ENCODE measurements at regions of chrX and their contacts with region 1.

Region 1: DNA sequence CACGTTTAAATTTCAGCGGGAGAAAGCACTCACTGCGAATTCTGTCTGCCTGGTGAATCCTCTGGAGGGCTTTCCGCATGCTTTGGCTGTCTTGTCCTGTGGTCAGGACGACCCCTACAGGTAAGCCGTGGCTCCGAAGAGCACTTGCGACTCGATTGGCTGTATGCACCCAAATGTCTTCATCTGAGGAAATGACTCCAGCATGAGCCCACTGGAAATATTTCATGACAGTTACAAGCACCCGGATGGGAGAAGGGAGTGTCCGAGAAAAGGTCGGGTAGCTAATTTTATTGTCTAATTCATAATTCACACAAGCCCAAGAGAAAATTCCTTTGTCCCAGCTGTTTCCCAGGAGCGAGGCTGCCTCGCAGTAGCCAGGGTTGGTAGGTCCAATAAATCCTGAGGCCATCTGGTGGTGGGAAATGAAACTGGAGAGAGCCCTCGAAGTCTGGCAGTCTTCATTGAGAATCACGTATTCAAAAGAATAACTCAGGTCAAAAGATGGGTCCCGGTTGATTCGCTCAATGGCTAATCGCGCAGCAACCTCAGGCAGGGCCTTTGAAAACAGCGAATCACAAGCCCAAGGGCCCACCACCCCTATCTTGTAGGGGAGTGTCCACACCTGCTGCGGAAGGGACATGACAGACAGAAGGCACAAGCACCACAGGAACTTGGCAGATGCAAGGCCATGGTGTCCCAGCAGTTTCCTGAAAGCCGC is 6.6 kb downstream of the GUCY2F start:
- DNase-seq: peak; percentile 20
- H3K4me3 ChIP-seq: no peak overlapping the region
- H3K27ac ChIP-seq: no peak overlapping the region
- H3K4me1 ChIP-seq: no peaks in the 10 kb centered on the region
- H3K27me3 ChIP-seq: no peaks in the 10 kb centered on the region
- CTCF ChIP-seq: peak; percentile 38

Region 2: GRCh38 chrX:108699368-108699767 is 776.0 kb before region 1 on chrX:
- intact Hi-C with region 1: loop called (anchors 10 kb)
- DNase-seq: no peak
- H3K4me3 ChIP-seq: no peak overlapping the region
- H3K27ac ChIP-seq: no peak overlapping the region
- H3K4me1 ChIP-seq: no peaks in the 10 kb centered on the region
- H3K27me3 ChIP-seq: no peaks in the 10 kb centered on the region
- CTCF ChIP-seq: peak; percentile 9

Region 3: DNA sequence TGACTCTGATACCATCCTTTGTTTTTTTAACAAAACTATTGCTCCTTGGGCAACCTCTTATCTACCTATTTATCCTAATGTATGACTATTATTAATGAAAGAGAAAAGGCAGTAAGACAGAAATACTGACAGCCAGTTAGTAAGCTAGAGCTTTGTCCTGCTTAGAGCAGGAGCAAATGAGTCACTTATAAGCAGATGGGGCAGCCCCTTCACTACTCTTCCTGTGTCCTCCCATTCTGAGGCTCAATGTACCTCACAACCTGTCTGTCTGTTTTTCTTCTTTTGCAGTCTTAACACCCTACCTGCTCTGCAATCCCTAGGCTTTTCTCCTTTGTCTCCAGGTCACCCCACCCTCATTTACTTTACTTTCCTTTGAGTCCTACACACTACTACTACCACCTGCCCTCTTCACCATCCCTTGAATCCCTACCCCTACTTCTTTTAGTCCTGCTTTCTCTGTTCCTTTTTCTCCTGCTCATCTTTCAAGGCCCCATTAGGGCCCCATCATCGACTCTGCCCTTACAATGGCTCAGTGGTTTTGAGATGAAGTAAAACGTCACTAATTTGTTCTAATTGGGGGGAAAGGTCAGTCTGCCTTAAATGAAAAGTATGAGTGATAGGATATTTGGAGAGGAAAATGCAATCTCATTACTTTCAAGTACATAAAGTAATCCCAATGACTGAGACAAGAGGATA is 287.7 kb before region 1 on chrX:
- intact Hi-C with region 1: no loop called
- DNase-seq: no peak
- H3K4me3 ChIP-seq: no peak overlapping the region
- H3K27ac ChIP-seq: no peak overlapping the region
- H3K4me1 ChIP-seq: no peaks in the 10 kb centered on the region
- H3K27me3 ChIP-seq: no peaks in the 10 kb centered on the region
- CTCF ChIP-seq: no peak

Measured in colonic mucosa (tissue), 4 donors.